ENCODE measurements at regions of chr7 and their contacts with region 1.

Region 1: DNA sequence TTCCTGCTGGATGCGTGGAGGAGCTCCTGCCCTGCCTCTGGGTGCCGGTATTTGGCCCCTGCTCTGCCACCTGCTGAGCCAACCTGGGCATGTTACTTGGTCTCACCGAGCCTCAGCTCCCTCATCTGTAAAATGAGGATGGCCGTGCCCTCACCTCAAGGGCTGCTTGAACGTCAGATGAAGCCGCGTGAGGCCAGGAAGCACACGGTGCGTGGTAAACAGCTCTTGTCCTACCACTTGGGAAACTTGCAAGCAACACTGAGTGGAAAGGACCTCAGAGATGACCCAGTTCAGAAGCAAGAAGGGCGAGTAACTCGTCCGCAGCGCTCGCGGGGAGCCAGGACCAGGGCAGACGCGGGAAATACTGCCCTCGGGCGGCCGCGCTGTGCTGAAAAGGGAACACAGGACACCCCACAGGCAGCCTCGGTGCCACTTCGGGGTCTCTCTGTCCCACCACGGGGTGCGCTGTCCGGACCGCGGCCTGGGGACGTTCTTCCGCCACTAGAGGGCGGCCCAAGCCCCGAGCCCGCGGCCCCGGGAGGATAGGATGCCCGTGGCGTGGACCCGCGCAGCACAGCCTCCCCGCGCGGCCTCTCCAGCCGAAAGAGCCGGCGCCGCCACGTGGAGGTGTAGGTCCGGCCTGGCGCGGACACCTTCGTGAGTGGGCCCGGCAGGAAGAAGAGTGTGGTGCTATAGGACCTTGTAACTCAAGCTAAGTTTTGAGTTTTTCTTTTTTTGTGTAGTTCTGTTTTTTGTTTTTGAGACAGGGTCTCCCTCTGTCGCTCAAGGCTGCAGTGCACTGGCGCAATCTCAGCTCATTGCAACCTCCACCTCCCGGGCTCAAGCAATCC is 94.1 kb downstream of the PRKAG2 start:
- DNase-seq: peak; percentile 50 to 85 (median 74)
- ATAC-seq: peak; percentile 89
- H3K4me3 ChIP-seq: peak overlapping the region; percentile 44 to 55
- H3K4me3 Mint-ChIP-seq: peak overlapping the region; percentile 87
- H3K27ac ChIP-seq: peak overlapping the region; percentile 29 to 49
- H3K27ac Mint-ChIP-seq: peak overlapping the region; percentile 93
- H3K4me1 ChIP-seq: peaks cover 12% of the 10 kb centered on the region
- H3K4me1 Mint-ChIP-seq: peaks cover 11% of the 10 kb centered on the region
- H3K27me3 ChIP-seq: no peaks in the 10 kb centered on the region
- H3K27me3 Mint-ChIP-seq: no peaks in the 10 kb centered on the region
- CTCF ChIP-seq: peak; percentile 84

Region 2: DNA sequence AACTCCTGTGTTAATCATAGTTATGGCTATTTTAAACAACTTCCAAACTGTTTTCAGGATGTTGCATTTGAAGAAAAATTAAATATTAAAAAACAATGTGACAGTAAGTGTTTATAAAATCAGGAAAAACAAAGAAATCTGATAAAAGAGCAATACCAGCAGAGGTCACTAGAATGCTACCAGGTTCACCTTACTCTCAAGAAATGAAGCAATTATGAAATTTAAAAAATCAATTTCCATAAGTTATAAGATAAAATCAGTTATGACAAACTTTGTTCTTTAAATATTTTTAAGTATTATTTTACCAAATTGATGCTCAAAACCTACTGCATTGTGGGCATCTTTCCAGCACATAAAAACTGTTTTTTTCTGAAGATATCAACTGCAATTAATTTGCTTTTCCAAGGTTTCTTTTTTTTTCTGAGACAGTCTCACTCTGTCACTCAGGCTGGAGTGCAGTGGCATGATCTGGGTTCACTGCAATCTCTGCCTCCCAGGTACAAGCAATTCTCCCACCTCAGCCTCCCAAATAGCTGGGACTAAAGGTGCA is 212.4 kb before region 1 on chr7:
- CTCF ChIA-PET with region 1: interaction called, 4 read pairs
- POLR2A ChIA-PET with region 1: no interaction called
- intact Hi-C with region 1: loop called in 1 of 2 experiments (anchors 2 kb)
- DNase-seq: peak in 2 of 9 experiments; percentile 13 to 35
- ATAC-seq: no peak
- H3K4me3 ChIP-seq: no peak overlapping the region
- H3K4me3 Mint-ChIP-seq: no peak overlapping the region
- H3K27ac ChIP-seq: no peak overlapping the region
- H3K27ac Mint-ChIP-seq: no peak overlapping the region
- H3K4me1 ChIP-seq: no peaks in the 10 kb centered on the region
- H3K4me1 Mint-ChIP-seq: no peaks in the 10 kb centered on the region
- H3K27me3 ChIP-seq: no peaks in the 10 kb centered on the region
- H3K27me3 Mint-ChIP-seq: no peaks in the 10 kb centered on the region
- CTCF ChIP-seq: no peak

Region 3: GRCh38 chr7:151754142-151754590 is 28.7 kb before region 1 on chr7:
- CTCF ChIA-PET with region 1: interaction called, 54 read pairs
- POLR2A ChIA-PET with region 1: no interaction called
- intact Hi-C with region 1: loop called in 1 of 2 experiments (anchors 2 kb)
- DNase-seq: peak in 3 of 9 experiments; percentile 17 to 48 (median 34)
- ATAC-seq: no peak
- H3K4me3 ChIP-seq: no peak overlapping the region
- H3K4me3 Mint-ChIP-seq: no peak overlapping the region
- H3K27ac ChIP-seq: no peak overlapping the region
- H3K27ac Mint-ChIP-seq: no peak overlapping the region
- H3K4me1 ChIP-seq: peaks cover 20% of the 10 kb centered on the region
- H3K4me1 Mint-ChIP-seq: peaks cover 24% of the 10 kb centered on the region
- H3K27me3 ChIP-seq: no peaks in the 10 kb centered on the region
- H3K27me3 Mint-ChIP-seq: no peaks in the 10 kb centered on the region
- CTCF ChIP-seq: no peak

Region 4: GRCh38 chr7:151795168-151795811 is 12.5 kb after region 1 on chr7:
- CTCF ChIA-PET with region 1: interaction called, 45 read pairs
- POLR2A ChIA-PET with region 1: interaction called, 3 read pairs
- intact Hi-C with region 1: no loop called
- DNase-seq: peak in 5 of 9 experiments; percentile 17 to 70 (median 53)
- ATAC-seq: peak; percentile 79
- H3K4me3 ChIP-seq: no peak overlapping the region
- H3K4me3 Mint-ChIP-seq: no peak overlapping the region
- H3K27ac ChIP-seq: no peak overlapping the region
- H3K27ac Mint-ChIP-seq: no peak overlapping the region
- H3K4me1 ChIP-seq: no peaks in the 10 kb centered on the region
- H3K4me1 Mint-ChIP-seq: peaks cover 11% of the 10 kb centered on the region
- H3K27me3 ChIP-seq: no peaks in the 10 kb centered on the region
- H3K27me3 Mint-ChIP-seq: no peaks in the 10 kb centered on the region
- CTCF ChIP-seq: no peak

Region 5: DNA sequence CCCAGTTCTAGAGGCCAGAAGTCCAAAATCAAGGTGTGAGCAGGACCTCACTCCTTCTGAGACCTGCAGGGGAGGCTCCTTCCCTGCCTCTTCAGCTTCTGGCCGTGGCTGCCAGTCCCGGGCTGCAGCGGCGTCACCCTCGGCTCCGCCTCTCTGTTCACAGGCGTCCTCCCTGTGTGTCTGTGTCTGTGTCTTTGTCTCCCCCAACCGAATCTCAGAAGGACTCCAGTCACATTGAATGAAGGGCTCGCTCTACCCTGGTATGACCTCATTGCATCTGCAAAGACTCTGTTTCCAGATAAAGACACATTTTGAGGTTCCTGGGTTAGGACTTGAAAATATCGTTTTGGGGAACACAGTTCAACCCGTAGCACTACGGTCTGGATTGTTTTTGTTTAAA is 209.6 kb after region 1 on chr7:
- CTCF ChIA-PET with region 1: no interaction called
- POLR2A ChIA-PET with region 1: no interaction called
- intact Hi-C with region 1: loop called in 1 of 2 experiments (anchors 1 kb)
- DNase-seq: peak; percentile 12 to 75 (median 58)
- ATAC-seq: peak; percentile 97
- H3K4me3 ChIP-seq: no peak overlapping the region
- H3K4me3 Mint-ChIP-seq: no peak overlapping the region
- H3K27ac ChIP-seq: no peak overlapping the region
- H3K27ac Mint-ChIP-seq: peak overlapping the region; percentile 58
- H3K4me1 ChIP-seq: no peaks in the 10 kb centered on the region
- H3K4me1 Mint-ChIP-seq: peaks cover 7% of the 10 kb centered on the region
- H3K27me3 ChIP-seq: no peaks in the 10 kb centered on the region
- H3K27me3 Mint-ChIP-seq: peaks cover 28% of the 10 kb centered on the region
- CTCF ChIP-seq: peak; percentile 34

Measured in CD8-positive, alpha-beta T cell (primary cell).